ENCODE measurements at regions of chr6 and their contacts with region 1.

Region 1: GRCh38 chr6:2563635-2564034 is 187.1 kb downstream of the MYLK4 start:
- DNase-seq: peak; percentile 34
- ATAC-seq: peak; percentile 49
- H3K4me3 ChIP-seq: 0 out of 6 replicates have a peak overlapping the region, but pooled peaks of 1 of the 3 experiments have one; percentile 2
- H3K27ac ChIP-seq: no peak overlapping the region
- H3K4me1 ChIP-seq: peaks cover 29% of the 10 kb centered on the region
- H3K27me3 ChIP-seq: peaks cover 3 to 55% of the 10 kb centered on the region in 2 experiments; a peak in 4 of 5 replicates
- CTCF ChIP-seq: no peak
- EP300 ChIP-seq: no peak
- POLR2A ChIP-seq: no peak
- RAD21 ChIP-seq: no peak

Region 2: DNA sequence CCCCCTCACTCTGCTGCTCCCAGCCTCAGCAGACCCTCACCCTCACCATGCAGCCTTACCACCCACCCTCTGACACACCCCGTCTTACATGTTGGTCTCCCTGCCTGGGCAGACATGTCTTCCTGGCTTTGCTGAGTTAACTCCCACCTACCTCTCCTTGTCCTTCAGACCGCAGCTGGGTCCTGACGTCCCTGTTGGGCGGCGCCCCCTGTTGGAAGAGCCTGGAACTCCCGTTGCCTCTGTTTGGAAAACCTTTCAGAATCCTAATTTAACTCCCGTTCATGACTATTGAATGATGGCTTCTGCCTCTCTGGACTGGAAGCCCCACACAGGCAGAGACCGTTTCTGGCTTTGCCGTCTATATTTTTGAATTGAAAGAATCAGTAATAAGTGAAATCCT is 58.0 kb before region 1 on chr6:
- CTCF ChIA-PET with region 1: no interaction called
- POLR2A ChIA-PET with region 1: no interaction called
- in situ Hi-C with region 1: no loop called
- intact Hi-C with region 1: no loop called
- DNase-seq: no peak
- ATAC-seq: no peak
- H3K4me3 ChIP-seq: no peak overlapping the region
- H3K27ac ChIP-seq: no peak overlapping the region
- H3K4me1 ChIP-seq: peaks cover 38% of the 10 kb centered on the region
- H3K27me3 ChIP-seq: no peaks in the 10 kb centered on the region
- CTCF ChIP-seq: peak; percentile 62
- EP300 ChIP-seq: no peak
- POLR2A ChIP-seq: no peak
- RAD21 ChIP-seq: no peak

Region 3: GRCh38 chr6:2524090-2524489 is 39.5 kb before region 1 on chr6:
- CTCF ChIA-PET with region 1: no interaction called
- POLR2A ChIA-PET with region 1: no interaction called
- in situ Hi-C with region 1: no loop called
- intact Hi-C with region 1: no loop called
- DNase-seq: peak; percentile 82
- ATAC-seq: peak; percentile 85
- H3K4me3 ChIP-seq: no peak overlapping the region
- H3K27ac ChIP-seq: no peak overlapping the region
- H3K4me1 ChIP-seq: peaks cover 7% of the 10 kb centered on the region; the same call in 1 of the 2 replicates
- H3K27me3 ChIP-seq: no peaks in the 10 kb centered on the region
- CTCF ChIP-seq: peak; percentile 87
- EP300 ChIP-seq: peak in 1 of 2 experiments; percentile 46; a peak in 1 of 4 replicates
- POLR2A ChIP-seq: no peak
- RAD21 ChIP-seq: peak; percentile 59; the same call in 1 of the 2 replicates

Region 4: GRCh38 chr6:2542858-2543218 is 20.8 kb before region 1 on chr6:
- CTCF ChIA-PET with region 1: no interaction called
- POLR2A ChIA-PET with region 1: no interaction called
- in situ Hi-C with region 1: no loop called
- intact Hi-C with region 1: loop called (anchors 2 kb)
- DNase-seq: peak; percentile 77
- ATAC-seq: peak; percentile 87
- H3K4me3 ChIP-seq: peak overlapping the region in 1 of 3 experiments; percentile 15; a peak in 1 of 6 replicates
- H3K27ac ChIP-seq: no peak overlapping the region
- H3K4me1 ChIP-seq: peaks cover 18% of the 10 kb centered on the region
- H3K27me3 ChIP-seq: peaks cover 0 to 9% of the 10 kb centered on the region in 2 experiments; a peak in 2 of 5 replicates
- CTCF ChIP-seq: no peak
- EP300 ChIP-seq: peak in 1 of 2 experiments; percentile 40; a peak in 1 of 4 replicates
- POLR2A ChIP-seq: no peak
- RAD21 ChIP-seq: no peak

Region 5: GRCh38 chr6:2596222-2596621 is 32.6 kb after region 1 on chr6:
- CTCF ChIA-PET with region 1: no interaction called
- POLR2A ChIA-PET with region 1: no interaction called
- in situ Hi-C with region 1: no loop called
- intact Hi-C with region 1: no loop called
- DNase-seq: no peak
- ATAC-seq: peak; percentile 76
- H3K4me3 ChIP-seq: no peak overlapping the region
- H3K27ac ChIP-seq: no peak overlapping the region
- H3K4me1 ChIP-seq: no peaks in the 10 kb centered on the region
- H3K27me3 ChIP-seq: no peaks in the 10 kb centered on the region; a peak in 1 of 5 replicates
- CTCF ChIP-seq: peak; percentile 68
- EP300 ChIP-seq: no peak
- POLR2A ChIP-seq: no peak
- RAD21 ChIP-seq: peak; percentile 37; the same call in 1 of the 2 replicates

Region 6: DNA sequence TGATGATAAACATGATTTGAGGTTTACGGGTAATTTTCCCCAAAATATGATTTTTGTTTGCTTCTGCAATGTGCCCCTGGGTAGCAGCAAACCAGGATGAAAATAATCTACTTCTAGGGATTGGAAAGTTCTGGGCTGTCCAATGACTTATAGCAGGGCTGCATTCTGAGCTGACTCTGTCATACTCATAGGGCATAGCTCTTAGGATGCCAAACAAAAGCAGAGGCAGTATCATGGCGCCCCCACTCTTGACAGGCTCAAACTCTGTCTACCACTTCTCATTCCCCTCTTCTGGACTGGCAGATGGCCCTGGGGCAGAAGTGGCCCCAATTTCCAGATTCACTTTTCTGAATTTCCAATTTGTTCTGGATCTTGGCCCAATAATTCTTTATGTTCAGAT is 267.8 kb after region 1 on chr6:
- CTCF ChIA-PET with region 1: no interaction called
- POLR2A ChIA-PET with region 1: no interaction called
- in situ Hi-C with region 1: no loop called
- intact Hi-C with region 1: no loop called
- DNase-seq: no peak
- ATAC-seq: peak; percentile 43; the same call in 1 of the 3 replicates
- H3K4me3 ChIP-seq: no peak overlapping the region
- H3K27ac ChIP-seq: no peak overlapping the region
- H3K4me1 ChIP-seq: peaks cover 8% of the 10 kb centered on the region
- H3K27me3 ChIP-seq: no peaks in the 10 kb centered on the region
- CTCF ChIP-seq: no peak
- EP300 ChIP-seq: no peak
- POLR2A ChIP-seq: no peak
- RAD21 ChIP-seq: no peak